Ovary (tissue), 10 donors: ENCODE measurements at regions of chr1 and their contacts with region 1.

Region 1: GRCh38 chr1:156421062-156421938 is 52.3 kb downstream of the RHBG start:
- DNase-seq: peak; percentile 37 to 70 (median 62)
- H3K4me3 ChIP-seq: no peak overlapping the region
- H3K27ac ChIP-seq: no peak overlapping the region
- H3K4me1 ChIP-seq: peaks cover 5% of the 10 kb centered on the region
- H3K27me3 ChIP-seq: peaks cover 13% of the 10 kb centered on the region
- CTCF ChIP-seq: no peak
- EP300 ChIP-seq: no peak
- POLR2A ChIP-seq: no peak

Region 2: DNA sequence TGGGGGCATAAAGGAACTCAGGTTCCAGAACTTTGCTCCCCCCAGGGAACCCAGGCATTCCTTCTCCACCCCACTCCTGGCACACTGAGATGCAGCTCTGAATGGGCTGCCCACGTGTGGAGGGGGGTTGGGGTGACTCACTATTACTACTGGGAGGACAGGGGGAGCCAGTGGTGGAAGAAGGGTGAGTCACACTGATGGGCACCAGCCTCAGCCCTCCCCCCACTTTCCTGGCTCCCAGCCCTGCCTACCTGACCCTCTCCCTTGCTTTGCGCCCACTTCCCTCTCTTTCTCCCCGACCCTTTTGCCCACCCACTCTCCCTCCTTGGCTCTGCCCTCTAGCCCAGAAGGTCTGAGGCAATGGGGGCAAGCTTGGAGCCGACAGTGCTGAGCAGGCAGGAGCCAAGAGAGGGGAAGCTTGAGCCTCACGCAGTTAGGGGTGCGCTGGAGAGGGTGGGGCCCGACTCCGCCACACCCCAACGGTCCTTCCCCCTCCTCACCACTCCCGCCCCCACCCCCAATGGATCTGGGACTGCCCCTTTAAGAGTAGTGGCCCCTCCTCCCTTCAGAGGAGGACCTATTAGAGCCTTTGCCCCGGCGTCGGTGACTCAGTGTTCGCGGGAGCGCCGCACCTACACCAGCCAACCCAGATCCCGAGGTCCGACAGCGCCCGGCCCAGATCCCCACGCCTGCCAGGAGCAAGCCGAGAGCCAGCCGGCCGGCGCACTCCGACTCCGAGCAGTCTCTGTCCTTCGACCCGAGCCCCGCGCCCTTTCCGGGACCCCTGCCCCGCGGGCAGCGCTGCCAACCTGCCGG is 307.0 kb before region 1 on chr1 and contains the start of gene LMNA:
- intact Hi-C with region 1: no loop called
- DNase-seq: peak; percentile 91 to 95 (median 93)
- H3K4me3 ChIP-seq: peak within 1 kb of the TSS; percentile 86
- H3K27ac ChIP-seq: peak within 1 kb of the TSS; percentile 90 to 94
- H3K4me1 ChIP-seq: peaks cover 20% of the 10 kb centered on the region
- H3K27me3 ChIP-seq: no peaks in the 10 kb centered on the region
- CTCF ChIP-seq: no peak
- EP300 ChIP-seq: peak; percentile 71
- POLR2A ChIP-seq: peak; percentile 99
- total RNA-seq, gene LMNA: 197 to 609 (median 377) TPM

Region 3: DNA sequence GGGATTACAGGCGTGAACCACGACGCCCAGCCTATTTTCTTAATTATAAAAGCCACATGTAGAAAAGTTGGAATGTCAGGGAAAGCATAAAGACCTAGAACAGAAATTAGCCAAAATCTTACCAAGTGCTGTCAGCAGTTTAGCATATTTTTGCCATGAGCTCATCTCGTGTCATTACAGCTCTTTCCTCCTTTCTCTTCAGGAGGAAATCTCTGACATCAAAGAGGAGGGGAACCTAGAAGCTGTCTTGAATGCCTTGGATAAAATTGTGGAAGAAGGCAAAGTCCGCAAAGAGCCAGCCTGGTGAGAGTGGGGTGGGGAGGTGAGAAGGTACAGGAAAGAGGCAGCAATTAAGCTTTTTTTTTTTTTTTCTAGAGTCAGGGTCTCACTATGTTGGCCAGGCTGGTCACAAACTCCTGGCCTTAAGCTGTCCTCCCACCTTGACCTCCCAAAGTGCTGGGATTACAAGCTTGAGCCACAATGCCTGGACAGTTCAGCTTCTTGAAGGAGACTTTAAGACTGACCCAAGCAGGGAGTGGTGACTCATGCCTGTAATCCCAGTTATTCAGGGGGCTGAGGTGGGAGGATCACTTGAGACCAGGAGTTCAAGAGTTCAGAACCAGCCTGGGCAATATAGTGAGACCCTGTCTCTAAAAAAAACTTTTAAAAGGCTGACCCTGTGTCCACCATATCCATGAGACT is 187.7 kb before region 1 on chr1:
- intact Hi-C with region 1: loop called in 1 of 4 experiments (anchors 10 kb)
- DNase-seq: no peak
- H3K4me3 ChIP-seq: no peak overlapping the region
- H3K27ac ChIP-seq: no peak overlapping the region
- H3K4me1 ChIP-seq: no peaks in the 10 kb centered on the region
- H3K27me3 ChIP-seq: no peaks in the 10 kb centered on the region
- CTCF ChIP-seq: no peak
- EP300 ChIP-seq: no peak
- POLR2A ChIP-seq: no peak

Region 4: GRCh38 chr1:156338180-156338973 is 82.9 kb before region 1 on chr1 and contains the starts of genes CCT3 and TSACC:
- intact Hi-C with region 1: no loop called
- DNase-seq: peak; percentile 99 to 100 (median 100)
- H3K4me3 ChIP-seq: peak within 1 kb of the TSS; percentile 77
- H3K27ac ChIP-seq: peak within 1 kb of the TSS; percentile 26 to 68
- H3K4me1 ChIP-seq: peaks cover 7% of the 10 kb centered on the region
- H3K27me3 ChIP-seq: no peaks in the 10 kb centered on the region
- CTCF ChIP-seq: no peak
- EP300 ChIP-seq: peak; percentile 64
- POLR2A ChIP-seq: peak; percentile 42
- total RNA-seq, gene CCT3: 157 to 228 (median 175) TPM
- total RNA-seq, gene TSACC: not detected

Region 5: GRCh38 chr1:156475568-156476500 is 54.5 kb after region 1 on chr1:
- intact Hi-C with region 1: no loop called
- DNase-seq: peak; percentile 91 to 95 (median 93)
- H3K4me3 ChIP-seq: no peak overlapping the region
- H3K27ac ChIP-seq: peak overlapping the region; percentile 68 to 75
- H3K4me1 ChIP-seq: peaks cover 20% of the 10 kb centered on the region
- H3K27me3 ChIP-seq: no peaks in the 10 kb centered on the region
- CTCF ChIP-seq: no peak
- EP300 ChIP-seq: no peak
- POLR2A ChIP-seq: no peak

Region 6: DNA sequence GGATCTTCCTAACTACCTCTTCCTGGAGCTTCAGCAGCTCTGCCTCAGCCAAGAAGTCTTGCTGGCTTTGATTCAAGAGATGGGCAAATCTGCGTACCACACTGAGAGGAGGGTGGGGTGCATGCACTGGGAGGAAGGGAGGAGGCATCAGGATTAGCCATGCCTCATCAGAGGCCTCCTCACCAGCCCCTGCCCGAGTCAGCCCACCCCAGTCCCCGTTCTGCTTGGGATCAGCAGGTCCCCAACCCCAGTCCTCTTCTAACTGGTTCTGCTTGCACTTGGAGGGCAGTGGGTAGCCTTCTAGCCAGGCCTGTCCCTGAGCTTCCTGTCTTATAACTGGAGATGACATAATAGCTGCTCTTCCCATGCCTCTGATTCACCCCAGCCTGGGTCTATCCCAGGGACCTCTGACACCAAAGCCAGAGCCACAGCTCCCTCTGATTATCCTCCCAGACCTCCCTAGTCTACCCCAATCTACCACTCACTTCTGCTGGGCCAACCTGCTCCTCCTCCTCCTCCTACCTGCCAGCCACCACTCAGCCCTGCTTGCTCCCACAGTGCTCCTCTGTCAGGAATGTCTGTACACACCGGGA is 119.6 kb after region 1 on chr1:
- intact Hi-C with region 1: no loop called
- DNase-seq: no peak
- H3K4me3 ChIP-seq: no peak overlapping the region
- H3K27ac ChIP-seq: no peak overlapping the region
- H3K4me1 ChIP-seq: no peaks in the 10 kb centered on the region
- H3K27me3 ChIP-seq: no peaks in the 10 kb centered on the region
- CTCF ChIP-seq: no peak
- EP300 ChIP-seq: no peak
- POLR2A ChIP-seq: no peak